Naive thymus-derived CD4-positive, alpha-beta T cell (primary cell): ENCODE measurements at regions of chr11 and their contacts with region 1.

Region 1: GRCh38 chr11:109946322-109946846 is 146.8 kb upstream of the ZC3H12C start:
- DNase-seq: peak in 7 of 9 donors; percentile 7 to 51 (median 20)
- ATAC-seq: peak; percentile 97
- H3K4me3 ChIP-seq: no peak overlapping the region
- H3K4me3 Mint-ChIP-seq: peak overlapping the region in 7 of 10 donors; percentile 40 to 75 (median 66)
- H3K27ac ChIP-seq: no peak overlapping the region
- H3K27ac Mint-ChIP-seq: no peak overlapping the region
- H3K4me1 ChIP-seq: no peaks in the 10 kb centered on the region
- H3K4me1 Mint-ChIP-seq: peaks cover 0 to 10% (median 9%) of the 10 kb centered on the region in 7 donors
- H3K27me3 ChIP-seq: no peaks in the 10 kb centered on the region
- H3K27me3 Mint-ChIP-seq: peaks cover 0 to 22% (median 11%) of the 10 kb centered on the region in 5 donors

Region 2: DNA sequence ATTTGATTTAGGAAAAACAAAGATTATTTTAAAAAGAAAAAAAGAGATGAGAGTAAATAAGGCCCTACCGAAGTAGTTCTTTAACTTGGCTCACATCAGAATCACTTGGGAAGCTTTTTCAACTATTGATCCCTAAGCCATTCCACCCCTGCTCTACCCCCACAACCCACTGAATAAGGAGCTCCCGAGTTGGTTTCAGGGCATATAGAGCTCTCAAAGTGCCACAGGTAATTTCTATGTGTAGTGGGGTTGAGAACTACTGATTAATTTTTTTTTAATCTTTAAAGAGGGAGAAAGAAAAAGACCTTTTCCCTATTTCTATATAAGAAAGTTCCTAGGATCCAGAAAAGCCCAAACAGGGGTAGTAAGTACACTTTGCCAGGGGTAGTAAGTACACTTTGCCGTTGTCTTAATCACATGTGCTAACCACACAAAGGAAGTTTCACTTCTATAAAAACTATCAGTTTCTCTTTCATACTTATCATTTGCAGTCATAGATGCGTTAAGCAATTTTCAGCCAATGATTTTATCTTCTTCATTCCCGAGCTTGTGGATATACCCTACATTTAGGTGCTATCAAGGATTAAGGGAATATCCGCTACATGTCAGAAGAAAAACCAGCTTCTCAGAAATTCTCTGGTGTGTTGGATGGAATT is 38.4 kb after region 1 on chr11:
- CTCF ChIA-PET with region 1: no interaction called
- POLR2A ChIA-PET with region 1: no interaction called
- intact Hi-C with region 1: no loop called
- DNase-seq: no peak
- ATAC-seq: peak; percentile 68
- H3K4me3 ChIP-seq: no peak overlapping the region
- H3K4me3 Mint-ChIP-seq: peak overlapping the region in 2 of 10 donors; percentile 7 to 40
- H3K27ac ChIP-seq: no peak overlapping the region
- H3K27ac Mint-ChIP-seq: no peak overlapping the region
- H3K4me1 ChIP-seq: no peaks in the 10 kb centered on the region
- H3K4me1 Mint-ChIP-seq: peaks cover 0 to 16% (median 4%) of the 10 kb centered on the region in 7 donors
- H3K27me3 ChIP-seq: no peaks in the 10 kb centered on the region
- H3K27me3 Mint-ChIP-seq: peaks cover 6 to 19% (median 12%) of the 10 kb centered on the region in 5 donors

Region 3: GRCh38 chr11:110173811-110174644 is 227.6 kb after region 1 on chr11:
- CTCF ChIA-PET with region 1: no interaction called
- POLR2A ChIA-PET with region 1: no interaction called
- intact Hi-C with region 1: loop called in 1 of 2 experiments (anchors 5 kb)
- DNase-seq: peak in 8 of 9 donors; percentile 22 to 65 (median 44)
- ATAC-seq: peak; percentile 87
- H3K4me3 ChIP-seq: peak overlapping the region; percentile 17
- H3K4me3 Mint-ChIP-seq: peak overlapping the region; percentile 40 to 80 (median 62)
- H3K27ac ChIP-seq: no peak overlapping the region
- H3K27ac Mint-ChIP-seq: no peak overlapping the region
- H3K4me1 ChIP-seq: no peaks in the 10 kb centered on the region
- H3K4me1 Mint-ChIP-seq: peaks cover 0 to 8% (median 7%) of the 10 kb centered on the region in 7 donors
- H3K27me3 ChIP-seq: no peaks in the 10 kb centered on the region
- H3K27me3 Mint-ChIP-seq: peaks cover 6 to 34% (median 15%) of the 10 kb centered on the region in 5 donors

Region 4: DNA sequence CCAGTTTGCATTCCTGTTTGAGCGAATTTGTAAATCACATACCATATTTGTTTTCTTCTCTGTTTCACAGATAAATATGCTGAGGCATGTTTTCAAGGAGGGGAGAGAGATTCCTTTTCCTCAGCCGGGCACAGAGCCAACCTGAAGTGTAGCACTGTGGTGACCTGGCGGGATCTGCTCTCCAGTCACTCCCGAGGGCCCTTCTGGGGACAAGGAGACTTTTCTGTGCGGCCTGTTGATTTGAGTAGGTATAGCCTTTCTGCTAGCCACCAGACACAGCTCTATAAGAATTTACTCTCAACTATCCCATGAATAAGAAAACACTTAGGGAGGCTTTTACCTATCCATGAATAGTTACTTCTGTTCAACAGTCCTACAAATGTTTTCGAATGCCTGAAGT is 419.9 kb after region 1 on chr11:
- CTCF ChIA-PET with region 1: no interaction called
- POLR2A ChIA-PET with region 1: no interaction called
- intact Hi-C with region 1: loop called in 1 of 2 experiments (anchors 5 kb)
- DNase-seq: no peak
- ATAC-seq: no peak
- H3K4me3 ChIP-seq: no peak overlapping the region
- H3K4me3 Mint-ChIP-seq: no peak overlapping the region
- H3K27ac ChIP-seq: no peak overlapping the region
- H3K27ac Mint-ChIP-seq: no peak overlapping the region
- H3K4me1 ChIP-seq: no peaks in the 10 kb centered on the region
- H3K4me1 Mint-ChIP-seq: peaks cover 0 to 15% (median 0%) of the 10 kb centered on the region in 7 donors
- H3K27me3 ChIP-seq: no peaks in the 10 kb centered on the region
- H3K27me3 Mint-ChIP-seq: peaks cover 0 to 10% (median 0%) of the 10 kb centered on the region in 5 donors